Panc1 (cell line): ENCODE measurements at regions of chr7 and their contacts with region 1.

Region 1: GRCh38 chr7:128425850-128426249 is 16.1 kb upstream of the IMPDH1 start:
- DNase-seq: peak; percentile 63
- ATAC-seq: peak; percentile 76
- H3K4me3 ChIP-seq: no peak overlapping the region
- H3K27ac ChIP-seq: peak overlapping the region; percentile 20; the same call in 1 of the 2 replicates
- H3K4me1 ChIP-seq: peaks cover 23% of the 10 kb centered on the region
- H3K27me3 ChIP-seq: no peaks in the 10 kb centered on the region
- CTCF ChIP-seq: peak; percentile 97

Region 2: GRCh38 chr7:128347647-128348097 is 78.2 kb before region 1 on chr7:
- CTCF ChIA-PET with region 1: interaction called, 12 read pairs
- POLR2A ChIA-PET with region 1: no interaction called
- in situ Hi-C with region 1: no loop called
- intact Hi-C with region 1: loop called (anchors 1 kb)
- DNase-seq: no peak
- ATAC-seq: peak; percentile 64
- H3K4me3 ChIP-seq: no peak overlapping the region
- H3K27ac ChIP-seq: no peak overlapping the region
- H3K4me1 ChIP-seq: peaks cover 3% of the 10 kb centered on the region; the same call in 1 of the 2 replicates
- H3K27me3 ChIP-seq: no peaks in the 10 kb centered on the region
- CTCF ChIP-seq: peak; percentile 92

Region 3: DNA sequence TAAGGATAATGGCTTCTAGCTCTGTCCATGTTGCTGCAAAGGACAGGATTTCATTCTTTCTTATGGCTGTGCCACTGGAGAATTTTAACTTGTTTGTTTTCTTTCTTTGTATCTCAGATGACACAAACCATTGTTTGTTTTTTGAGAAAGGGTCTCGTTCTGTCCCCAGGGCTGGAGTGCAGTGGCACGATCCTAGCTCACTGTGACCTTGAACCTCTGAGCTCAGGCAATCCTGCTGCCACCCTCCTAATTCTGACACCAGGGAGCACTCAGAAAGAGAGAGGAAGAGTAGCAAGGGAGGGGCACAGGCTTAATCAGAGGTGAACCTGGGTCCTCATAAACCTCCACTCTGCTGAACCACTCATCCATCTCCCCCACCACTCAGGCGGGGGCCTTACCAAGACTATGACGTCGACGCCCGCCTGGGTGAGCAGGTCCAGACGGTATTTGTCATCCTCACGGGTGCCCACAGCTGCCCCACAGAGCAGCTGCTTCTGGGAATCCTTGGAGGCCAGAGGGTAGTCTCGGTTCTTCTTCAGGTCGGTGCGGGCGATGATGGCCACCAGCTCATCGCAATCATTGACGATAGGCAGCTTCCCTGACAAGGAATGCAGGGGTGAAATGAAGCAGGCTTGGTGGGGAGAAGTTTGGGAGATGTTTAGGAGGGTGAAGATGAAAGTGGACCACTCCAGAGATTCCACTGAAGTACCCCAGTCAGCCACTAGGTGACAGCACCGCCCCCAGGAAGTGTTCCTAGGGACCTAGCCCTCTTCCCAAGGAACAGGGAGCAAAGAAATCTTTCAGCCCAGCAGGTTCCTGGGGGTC is 27.6 kb before region 1 on chr7:
- CTCF ChIA-PET with region 1: interaction called, 8 read pairs
- POLR2A ChIA-PET with region 1: no interaction called
- in situ Hi-C with region 1: no loop called
- intact Hi-C with region 1: loop called (anchors 2 kb)
- DNase-seq: peak; percentile 45
- ATAC-seq: peak; percentile 89
- H3K4me3 ChIP-seq: no peak overlapping the region
- H3K27ac ChIP-seq: no peak overlapping the region
- H3K4me1 ChIP-seq: no peaks in the 10 kb centered on the region
- H3K27me3 ChIP-seq: no peaks in the 10 kb centered on the region
- CTCF ChIP-seq: peak; percentile 97

Region 4: DNA sequence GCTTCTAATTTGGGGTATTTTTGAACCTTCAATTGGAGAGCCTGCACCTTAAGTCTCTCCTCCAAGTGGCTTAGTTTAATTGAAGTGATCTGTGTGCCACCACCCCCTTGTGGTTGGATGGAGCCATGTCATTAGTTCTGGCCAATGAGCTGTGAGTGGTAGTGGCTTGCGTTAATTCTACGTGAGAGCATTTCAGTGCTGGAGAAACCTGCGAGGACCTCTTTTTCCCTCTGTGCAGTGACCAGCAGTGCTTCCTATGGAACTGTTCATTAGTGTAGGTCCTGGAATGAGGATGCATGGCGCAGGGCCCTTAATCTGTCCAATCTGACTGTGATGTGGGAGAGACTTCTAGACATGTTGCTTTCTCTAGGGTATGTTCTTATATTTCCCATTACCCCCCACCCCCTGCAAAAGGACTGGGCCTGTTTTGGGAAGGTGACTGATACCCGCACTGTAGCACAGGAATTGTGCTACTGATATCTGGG is 33.6 kb after region 1 on chr7:
- CTCF ChIA-PET with region 1: interaction called, 133 read pairs
- POLR2A ChIA-PET with region 1: no interaction called
- in situ Hi-C with region 1: no loop called
- intact Hi-C with region 1: loop called (anchors 1 kb)
- DNase-seq: no peak
- ATAC-seq: peak; percentile 64
- H3K4me3 ChIP-seq: peak overlapping the region in 1 of 2 experiments; percentile 70; a peak in 2 of 4 replicates
- H3K27ac ChIP-seq: peak overlapping the region; percentile 93
- H3K4me1 ChIP-seq: peaks cover 45% of the 10 kb centered on the region
- H3K27me3 ChIP-seq: no peaks in the 10 kb centered on the region
- CTCF ChIP-seq: peak; percentile 86